Natural killer cell (primary cell): ENCODE measurements at regions of chr2 and their contacts with region 1.

Region 1: DNA sequence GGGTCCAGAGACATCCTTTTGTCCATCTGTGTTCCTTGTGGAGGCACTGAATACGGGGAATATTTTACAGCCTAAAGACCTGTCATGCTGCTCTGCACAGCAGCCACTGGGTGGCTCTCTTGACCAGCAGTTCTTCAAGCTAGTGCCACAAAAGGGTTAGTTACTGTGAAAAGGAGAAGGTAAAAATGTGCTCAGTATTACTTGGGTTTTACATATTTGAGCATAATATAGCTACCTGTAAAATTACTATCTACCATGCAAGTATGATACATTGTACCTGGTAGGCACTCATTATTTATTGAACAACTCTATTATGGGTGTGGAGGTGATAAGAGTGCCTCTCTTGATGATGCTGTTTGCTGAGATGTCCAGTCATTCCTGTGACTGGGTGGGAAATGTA is 23.6 kb downstream of the FZD5 start:
- DNase-seq: peak in 1 of 2 donors; percentile 70
- ATAC-seq: peak; percentile 70 to 84 (median 77)
- H3K4me3 ChIP-seq: no peak overlapping the region
- H3K4me3 Mint-ChIP-seq: no peak overlapping the region
- H3K27ac ChIP-seq: no peak overlapping the region
- H3K27ac Mint-ChIP-seq: no peak overlapping the region
- H3K4me1 ChIP-seq: no peaks in the 10 kb centered on the region
- H3K4me1 Mint-ChIP-seq: no peaks in the 10 kb centered on the region
- H3K27me3 ChIP-seq: no peaks in the 10 kb centered on the region
- H3K27me3 Mint-ChIP-seq: no peaks in the 10 kb centered on the region
- CTCF ChIP-seq: peak; percentile 63

Region 2: GRCh38 chr2:207974216-207974605 is 228.1 kb after region 1 on chr2:
- intact Hi-C with region 1: loop called (anchors 10 kb)
- DNase-seq: no peak
- ATAC-seq: peak in 1 of 3 donors; percentile 41
- H3K4me3 ChIP-seq: no peak overlapping the region
- H3K4me3 Mint-ChIP-seq: no peak overlapping the region
- H3K27ac ChIP-seq: no peak overlapping the region
- H3K27ac Mint-ChIP-seq: peak overlapping the region in 1 of 2 donors; percentile 19
- H3K4me1 ChIP-seq: no peaks in the 10 kb centered on the region
- H3K4me1 Mint-ChIP-seq: peaks cover 15 to 35% of the 10 kb centered on the region in 2 donors
- H3K27me3 ChIP-seq: no peaks in the 10 kb centered on the region
- H3K27me3 Mint-ChIP-seq: no peaks in the 10 kb centered on the region
- CTCF ChIP-seq: no peak

Region 3: GRCh38 chr2:208040199-208041171 is 294.4 kb after region 1 on chr2:
- intact Hi-C with region 1: loop called (anchors 1 kb)
- DNase-seq: peak; percentile 46 to 75
- ATAC-seq: peak; percentile 79 to 83 (median 81)
- H3K4me3 ChIP-seq: no peak overlapping the region
- H3K4me3 Mint-ChIP-seq: no peak overlapping the region
- H3K27ac ChIP-seq: no peak overlapping the region
- H3K27ac Mint-ChIP-seq: no peak overlapping the region
- H3K4me1 ChIP-seq: no peaks in the 10 kb centered on the region
- H3K4me1 Mint-ChIP-seq: no peaks in the 10 kb centered on the region
- H3K27me3 ChIP-seq: no peaks in the 10 kb centered on the region
- H3K27me3 Mint-ChIP-seq: peaks cover 0 to 13% of the 10 kb centered on the region in 2 donors
- CTCF ChIP-seq: peak; percentile 71

Region 4: GRCh38 chr2:208072250-208072892 is 326.2 kb after region 1 on chr2:
- intact Hi-C with region 1: loop called (anchors 1 kb)
- DNase-seq: peak; percentile 25 to 75
- ATAC-seq: peak; percentile 70 to 80 (median 78)
- H3K4me3 ChIP-seq: no peak overlapping the region
- H3K4me3 Mint-ChIP-seq: no peak overlapping the region
- H3K27ac ChIP-seq: no peak overlapping the region
- H3K27ac Mint-ChIP-seq: no peak overlapping the region
- H3K4me1 ChIP-seq: no peaks in the 10 kb centered on the region
- H3K4me1 Mint-ChIP-seq: no peaks in the 10 kb centered on the region
- H3K27me3 ChIP-seq: no peaks in the 10 kb centered on the region
- H3K27me3 Mint-ChIP-seq: peaks cover 0 to 7% of the 10 kb centered on the region in 2 donors
- CTCF ChIP-seq: peak; percentile 77